CD4-positive, alpha-beta memory T cell (primary cell): ENCODE measurements at regions of chr1 and their contacts with region 1.

Region 1: DNA sequence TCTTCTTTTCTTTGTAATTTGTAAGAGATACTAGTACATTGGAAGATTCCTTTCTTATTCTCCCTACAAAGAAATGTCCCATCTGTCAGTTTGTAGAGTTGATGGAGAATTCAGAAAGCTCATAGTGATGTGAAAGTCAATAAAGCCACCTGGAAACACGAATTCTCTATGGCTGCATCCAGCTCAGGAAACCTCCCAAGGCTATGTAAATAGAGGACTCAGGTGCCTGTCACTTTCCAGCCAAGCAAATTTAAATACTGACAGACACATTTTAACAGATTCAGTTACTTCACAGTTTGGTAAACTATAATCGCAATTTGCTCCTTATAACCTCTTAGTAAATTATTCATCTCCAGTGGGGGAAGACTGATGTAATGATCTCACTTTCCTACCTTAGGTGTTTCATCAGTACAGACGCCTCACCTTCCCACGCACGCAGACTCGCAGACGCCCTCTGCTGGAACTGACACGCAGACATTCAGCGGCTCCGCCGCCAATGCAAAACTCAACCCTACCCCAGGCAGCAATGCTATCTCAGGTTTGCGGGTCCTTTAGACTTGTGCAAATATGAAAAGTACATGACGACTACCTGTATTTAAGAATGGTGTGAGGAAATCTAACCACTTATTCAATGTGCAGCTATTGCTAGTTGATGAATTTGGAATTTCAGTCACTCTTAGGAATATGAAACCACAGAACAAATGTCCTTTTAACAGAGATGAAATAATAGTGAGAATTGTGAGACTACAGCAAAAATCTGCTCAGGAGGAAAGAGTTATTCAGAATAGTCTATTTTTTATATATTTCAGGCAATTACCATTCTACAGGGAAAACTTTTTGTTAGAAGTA is 60.6 kb downstream of the PTPRC start:
- DNase-seq: peak; percentile 60 to 72 (median 66)
- H3K4me3 ChIP-seq: no peak overlapping the region
- H3K4me3 Mint-ChIP-seq: peak overlapping the region in 6 of 8 donors; percentile 26 to 76 (median 52)
- H3K27ac ChIP-seq: peak overlapping the region; percentile 33
- H3K27ac Mint-ChIP-seq: peak overlapping the region; percentile 85 to 91 (median 87)
- H3K4me1 ChIP-seq: peaks cover 87% of the 10 kb centered on the region
- H3K4me1 Mint-ChIP-seq: peaks cover 59 to 82% (median 70%) of the 10 kb centered on the region in 4 donors
- H3K27me3 ChIP-seq: no peaks in the 10 kb centered on the region
- H3K27me3 Mint-ChIP-seq: no peaks in the 10 kb centered on the region

Region 2: GRCh38 chr1:198275597-198275996 is 423.8 kb before region 1 on chr1:
- CTCF ChIA-PET with region 1: no interaction called
- POLR2A ChIA-PET with region 1: no interaction called
- intact Hi-C with region 1: loop called (anchors 10 kb)
- DNase-seq: no peak
- H3K4me3 ChIP-seq: no peak overlapping the region
- H3K4me3 Mint-ChIP-seq: no peak overlapping the region
- H3K27ac ChIP-seq: no peak overlapping the region
- H3K27ac Mint-ChIP-seq: no peak overlapping the region
- H3K4me1 ChIP-seq: no peaks in the 10 kb centered on the region
- H3K4me1 Mint-ChIP-seq: peaks cover 4 to 15% (median 11%) of the 10 kb centered on the region in 4 donors
- H3K27me3 ChIP-seq: no peaks in the 10 kb centered on the region
- H3K27me3 Mint-ChIP-seq: no peaks in the 10 kb centered on the region